Psoas muscle (tissue), 8 donors: ENCODE measurements at regions of chr12 and their contacts with region 1.

Region 1: GRCh38 chr12:113226696-113227568 is 5.7 kb downstream of the TPCN1 start:
- DNase-seq: peak; percentile 56 to 83
- ATAC-seq: peak; percentile 61 to 71 (median 67)
- H3K4me3 ChIP-seq: peak overlapping the region; percentile 14
- H3K27ac ChIP-seq: peak overlapping the region; percentile 95
- H3K4me1 ChIP-seq: peaks cover 85% of the 10 kb centered on the region
- H3K27me3 ChIP-seq: no peaks in the 10 kb centered on the region
- CTCF ChIP-seq: peak; percentile 11

Region 2: DNA sequence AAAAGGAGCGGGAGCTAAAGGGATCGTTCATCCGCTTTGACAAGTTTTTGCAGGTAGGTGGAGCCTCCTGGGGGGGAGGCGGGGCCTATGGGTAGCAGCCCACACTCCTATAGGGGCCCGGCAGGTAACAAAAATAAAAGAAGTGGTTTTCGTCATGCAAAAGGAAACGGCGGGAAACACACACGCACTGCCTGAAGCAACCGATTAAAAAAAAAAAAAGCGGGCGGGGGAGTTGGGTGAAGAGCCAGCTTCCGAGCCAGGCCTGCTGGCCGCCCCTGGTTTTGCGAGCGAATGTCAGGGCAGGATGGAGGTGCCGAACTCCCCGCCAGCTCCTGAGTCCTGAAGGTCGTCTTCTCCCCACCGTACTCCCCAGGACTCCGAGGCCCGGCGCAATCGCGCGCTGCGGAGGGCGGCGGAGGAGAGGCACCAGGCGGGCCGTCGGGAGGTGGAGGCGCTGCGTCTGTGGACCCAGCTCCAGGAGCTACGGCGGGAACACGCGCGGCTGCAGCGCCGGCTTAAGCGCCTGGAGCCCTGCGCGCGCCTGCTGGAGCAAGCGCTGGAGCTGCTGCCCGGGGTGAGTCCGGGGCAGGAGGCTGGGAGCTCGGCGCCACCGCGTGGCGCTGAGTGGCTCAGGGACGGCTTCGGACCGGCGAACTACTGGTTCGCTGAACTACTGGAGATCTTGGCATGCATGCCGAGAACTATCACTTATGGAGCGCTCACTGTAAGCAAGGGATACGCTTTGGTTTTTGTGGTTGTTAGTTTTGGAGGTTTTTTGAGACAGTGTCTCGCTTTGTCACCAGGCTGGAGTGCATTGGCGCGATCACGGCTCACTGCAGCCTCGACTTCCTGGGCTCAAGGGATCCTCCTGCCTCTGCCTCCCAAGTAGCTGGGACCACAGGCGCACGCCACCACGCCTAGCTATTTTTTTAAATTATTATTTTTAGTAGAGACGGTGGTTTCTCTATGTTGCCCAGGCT is 73.8 kb before region 1 on chr12:
- intact Hi-C with region 1: no loop called
- DNase-seq: peak; percentile 62 to 75
- ATAC-seq: peak; percentile 70 to 76 (median 72)
- H3K4me3 ChIP-seq: peak overlapping the region; percentile 50
- H3K27ac ChIP-seq: no peak overlapping the region
- H3K4me1 ChIP-seq: peaks cover 8% of the 10 kb centered on the region
- H3K27me3 ChIP-seq: peaks cover 0 to 59% (median 9%) of the 10 kb centered on the region in 3 donors
- CTCF ChIP-seq: no peak

Region 3: DNA sequence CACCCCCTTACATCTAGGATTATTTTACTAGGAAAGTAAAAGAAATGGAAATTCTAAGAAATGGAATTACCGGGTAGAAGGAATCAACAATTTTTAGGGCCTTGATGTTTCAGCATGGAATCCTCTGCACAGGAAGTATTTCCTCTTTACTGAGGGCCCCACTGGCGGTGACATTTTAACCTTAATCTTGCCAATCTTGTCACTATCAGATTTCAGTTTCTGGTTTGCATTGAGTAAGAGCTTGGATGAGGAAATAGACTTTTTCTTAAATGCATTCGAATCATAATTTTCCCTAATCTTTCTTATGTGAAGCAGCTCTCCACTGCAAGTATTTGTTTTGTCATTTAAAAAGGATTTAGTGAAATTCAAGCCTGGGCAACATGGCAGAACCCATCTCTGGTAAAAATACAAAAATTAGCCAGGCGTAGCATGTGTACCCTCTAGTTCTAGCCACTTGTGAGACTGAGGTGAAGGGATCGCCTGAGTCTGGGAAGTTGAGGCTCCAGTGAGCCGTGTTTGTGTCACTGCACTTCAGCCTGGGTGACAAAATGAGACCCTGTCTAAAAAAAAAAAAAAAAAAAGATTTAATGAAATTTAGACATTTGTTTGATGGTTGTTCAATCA is 35.0 kb after region 1 on chr12:
- intact Hi-C with region 1: loop called in 1 of 2 experiments (anchors 5 kb)
- DNase-seq: peak in 1 of 2 donors; percentile 12
- ATAC-seq: no peak
- H3K4me3 ChIP-seq: no peak overlapping the region
- H3K27ac ChIP-seq: peak overlapping the region; percentile 49
- H3K4me1 ChIP-seq: peaks cover 46% of the 10 kb centered on the region
- H3K27me3 ChIP-seq: no peaks in the 10 kb centered on the region
- CTCF ChIP-seq: no peak

Region 4: GRCh38 chr12:113310489-113310888 is 83.6 kb after region 1 on chr12:
- intact Hi-C with region 1: no loop called
- DNase-seq: no peak
- ATAC-seq: no peak
- H3K4me3 ChIP-seq: no peak overlapping the region
- H3K27ac ChIP-seq: no peak overlapping the region
- H3K4me1 ChIP-seq: peaks cover 4% of the 10 kb centered on the region
- H3K27me3 ChIP-seq: no peaks in the 10 kb centered on the region
- CTCF ChIP-seq: no peak